Activated CD8-positive, alpha-beta T cell treated with anti-CD3 and anti-CD28 coated beads, Interleukin-2, amount 10 ng/mL, durations not matched to agents 7 days and 5 days (primary cell): ENCODE measurements at regions of chr12 and their contacts with region 1.

Region 1: DNA sequence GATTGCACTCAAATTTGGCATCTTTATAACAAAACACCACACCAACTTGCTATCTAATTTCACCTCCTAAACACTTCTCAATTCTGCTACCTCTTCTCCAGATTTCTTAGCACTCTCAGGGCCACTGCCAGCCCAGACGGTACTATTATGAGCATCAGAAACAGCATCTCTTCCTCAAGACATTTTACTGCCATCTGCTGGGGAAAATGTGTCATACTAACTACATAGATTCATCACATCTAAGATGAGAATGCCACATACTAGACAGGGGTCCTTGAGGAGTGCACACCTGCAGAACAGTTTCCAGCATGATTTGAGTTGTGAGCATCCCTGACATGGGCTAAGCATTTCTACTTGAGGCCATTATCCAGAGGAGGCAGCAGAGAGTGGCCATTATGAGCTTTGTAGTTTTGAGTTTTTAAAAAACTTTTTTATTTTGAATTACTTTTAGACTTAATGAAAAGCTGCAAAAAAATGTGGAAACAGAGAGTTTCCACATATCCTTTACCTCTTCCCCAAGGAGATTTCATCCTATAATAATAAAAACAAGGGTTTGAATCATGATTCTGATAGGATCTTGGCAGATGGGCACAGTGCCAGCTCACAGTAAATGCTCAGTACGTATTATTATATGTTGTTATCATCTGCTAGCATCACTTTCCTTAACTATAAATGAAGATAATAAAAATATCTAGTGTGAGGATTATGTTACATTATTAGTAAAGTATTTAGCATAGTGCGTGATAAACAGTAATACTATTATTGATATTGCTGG is 15.2 kb upstream of the GRIP1 start:
- DNase-seq: peak; percentile 56
- ATAC-seq: peak; percentile 88
- H3K4me3 Mint-ChIP-seq: no peak overlapping the region
- H3K27ac Mint-ChIP-seq: no peak overlapping the region
- H3K4me1 Mint-ChIP-seq: peaks cover 18% of the 10 kb centered on the region
- H3K27me3 Mint-ChIP-seq: peaks cover 9% of the 10 kb centered on the region

Region 2: GRCh38 chr12:66683073-66683472 is 11.0 kb before region 1 on chr12:
- CTCF ChIA-PET with region 1: interaction called, 17 read pairs
- POLR2A ChIA-PET with region 1: no interaction called
- DNase-seq: no peak
- ATAC-seq: no peak
- H3K4me3 Mint-ChIP-seq: no peak overlapping the region
- H3K27ac Mint-ChIP-seq: no peak overlapping the region
- H3K4me1 Mint-ChIP-seq: no peaks in the 10 kb centered on the region
- H3K27me3 Mint-ChIP-seq: peaks cover 32% of the 10 kb centered on the region

Region 3: DNA sequence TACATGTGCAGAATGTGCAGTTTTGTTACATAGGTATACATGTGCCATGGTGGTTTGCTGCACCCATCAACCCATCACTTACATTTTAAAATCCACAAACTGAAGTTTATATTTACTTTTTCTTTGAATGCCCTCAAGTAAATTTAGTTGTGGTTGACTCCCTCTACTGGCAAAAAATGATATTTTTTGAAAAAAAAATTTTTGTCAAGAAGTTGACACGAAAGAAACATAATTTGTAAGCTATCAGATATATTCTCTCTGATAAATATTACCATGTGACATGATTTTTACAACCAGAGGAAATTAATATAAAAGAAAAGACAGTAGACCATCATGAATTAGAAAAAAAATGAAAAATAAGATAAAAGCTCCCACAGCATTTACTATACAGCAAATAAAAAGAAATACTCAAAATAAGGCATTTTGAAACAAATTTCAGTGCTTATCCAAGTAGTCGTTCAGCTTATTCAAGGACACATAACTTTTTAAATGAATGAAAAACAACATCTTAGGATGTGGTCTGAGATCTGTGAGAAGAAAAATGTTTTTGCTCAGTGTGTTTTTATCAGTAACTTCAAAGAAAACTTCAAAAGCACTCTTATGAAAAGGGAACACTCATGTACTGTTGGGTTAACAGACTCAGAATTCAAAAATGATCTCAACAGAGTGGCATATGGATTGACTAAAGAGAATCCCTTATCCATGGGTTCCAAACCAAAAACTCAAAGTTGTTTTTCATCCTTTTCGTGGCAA is 14.8 kb after region 1 on chr12:
- CTCF ChIA-PET with region 1: interaction called, 42 read pairs
- POLR2A ChIA-PET with region 1: no interaction called
- DNase-seq: no peak
- ATAC-seq: peak; percentile 64
- H3K4me3 Mint-ChIP-seq: peak overlapping the region; percentile 37
- H3K27ac Mint-ChIP-seq: peak overlapping the region; percentile 78
- H3K4me1 Mint-ChIP-seq: peaks cover 29% of the 10 kb centered on the region
- H3K27me3 Mint-ChIP-seq: peaks cover 2% of the 10 kb centered on the region

Region 4: DNA sequence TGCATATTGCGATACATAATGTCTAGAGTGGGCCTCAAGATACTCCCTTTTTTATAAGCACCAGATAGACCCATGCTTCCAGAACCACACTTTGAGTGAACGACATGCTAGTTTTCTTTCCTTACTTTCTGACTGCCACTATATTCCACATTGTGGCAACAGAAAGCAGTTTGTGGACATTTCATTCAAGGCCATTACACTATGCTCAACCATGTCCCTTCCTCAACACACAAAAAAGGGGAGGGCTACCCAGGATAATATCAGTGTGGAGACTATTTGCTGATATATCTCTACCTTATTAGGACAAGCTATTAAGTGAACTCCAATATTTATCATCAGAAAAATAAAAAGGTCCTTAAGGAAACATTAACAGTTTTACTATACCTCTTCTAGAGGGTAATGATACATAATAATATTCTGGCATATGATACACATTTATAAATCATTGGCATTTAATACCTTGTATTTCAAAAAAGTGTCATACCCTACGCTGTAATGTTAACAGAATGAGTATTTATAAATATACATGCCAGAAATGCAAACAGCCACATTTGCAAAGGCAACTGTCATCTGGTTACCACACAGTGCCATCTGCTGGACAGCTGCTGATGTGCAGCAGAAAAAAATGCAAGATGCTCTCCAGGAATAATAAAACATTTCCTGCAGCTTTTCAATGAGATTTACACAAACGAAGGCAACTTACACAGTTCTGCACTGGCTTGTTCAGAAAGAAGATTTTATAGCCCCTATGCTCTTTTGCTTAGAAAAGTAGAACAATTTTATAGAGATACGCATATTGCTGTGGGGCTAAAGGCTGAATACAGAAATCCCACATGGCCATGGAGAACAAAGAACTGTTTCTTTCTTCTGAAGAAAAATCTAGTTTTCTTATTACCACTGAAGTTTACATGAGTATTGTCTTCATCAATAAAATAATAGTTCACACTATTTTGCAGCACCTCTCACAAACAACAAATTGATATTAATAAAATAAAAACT is 167.0 kb after region 1 on chr12:
- CTCF ChIA-PET with region 1: interaction called, 24 read pairs
- POLR2A ChIA-PET with region 1: no interaction called
- DNase-seq: peak; percentile 78
- ATAC-seq: peak; percentile 30
- H3K4me3 Mint-ChIP-seq: no peak overlapping the region
- H3K27ac Mint-ChIP-seq: no peak overlapping the region
- H3K4me1 Mint-ChIP-seq: peaks cover 24% of the 10 kb centered on the region
- H3K27me3 Mint-ChIP-seq: peaks cover 18% of the 10 kb centered on the region